ENCODE measurements at regions of chr1 and their contacts with region 1.

Region 1: GRCh38 chr1:25338188-25338981 is at the start of gene TMEM50A:
- DNase-seq: peak; percentile 99
- H3K4me3 Mint-ChIP-seq: peak within 1 kb of the TSS; percentile 97
- H3K27ac Mint-ChIP-seq: peak within 1 kb of the TSS; percentile 98
- H3K4me1 Mint-ChIP-seq: peaks cover 25% of the 10 kb centered on the region
- H3K27me3 Mint-ChIP-seq: no peaks in the 10 kb centered on the region
- total RNA-seq, gene TMEM50A: 94.1 and 102 TPM in 2 replicates

Region 2: DNA sequence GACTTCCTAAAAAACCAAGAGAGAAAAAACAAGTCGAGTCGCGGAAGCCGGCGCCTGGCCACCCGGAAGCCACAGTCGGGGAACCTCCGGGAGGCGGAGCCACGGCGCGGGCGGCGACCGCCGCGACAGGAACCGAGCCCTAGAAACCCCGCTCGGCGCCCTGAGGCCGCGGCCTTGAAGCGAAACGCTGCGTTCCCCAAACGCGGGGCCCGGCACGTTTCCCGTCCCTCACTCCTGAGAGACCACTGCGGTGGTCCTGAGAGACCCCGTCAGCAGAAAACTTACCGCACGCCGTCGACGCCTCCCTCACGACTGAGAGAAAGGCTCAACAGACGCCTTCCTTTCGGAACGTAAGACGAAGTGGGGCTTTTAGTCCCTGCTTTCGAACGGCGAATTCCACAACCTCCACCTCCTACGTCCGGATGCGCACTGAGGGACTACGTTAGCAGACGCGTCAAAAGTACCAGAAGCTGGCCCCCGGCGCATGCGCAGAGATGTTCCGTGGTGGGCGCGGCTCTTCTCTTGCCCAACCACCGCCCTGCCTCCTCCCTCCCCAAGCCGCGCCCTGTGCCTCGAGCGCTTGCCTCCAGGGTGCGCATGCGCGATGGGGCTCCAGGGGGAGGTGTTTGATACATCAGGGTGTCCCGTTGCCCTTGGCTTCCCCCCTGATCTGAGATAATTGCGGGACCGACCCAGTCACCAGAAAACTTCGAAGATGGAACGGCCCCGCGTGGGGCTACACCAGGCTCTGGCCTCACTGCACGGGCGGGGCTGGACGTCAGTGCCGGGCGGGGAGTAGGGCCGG is 91.2 kb before region 1 on chr1 and contains the start of gene RSRP1:
- intact Hi-C with region 1: loop called (anchors 5 kb)
- DNase-seq: peak; percentile 100
- H3K4me3 Mint-ChIP-seq: peak within 1 kb of the TSS; percentile 97
- H3K27ac Mint-ChIP-seq: peak within 1 kb of the TSS; percentile 99
- H3K4me1 Mint-ChIP-seq: peaks cover 42% of the 10 kb centered on the region
- H3K27me3 Mint-ChIP-seq: peaks cover 7% of the 10 kb centered on the region
- total RNA-seq, gene RSRP1: 117 and 118 TPM in 2 replicates

Region 3: GRCh38 chr1:25469177-25469576 is 130.8 kb after region 1 on chr1:
- intact Hi-C with region 1: loop called (anchors 5 kb)
- DNase-seq: no peak
- H3K4me3 Mint-ChIP-seq: no peak overlapping the region
- H3K27ac Mint-ChIP-seq: no peak overlapping the region
- H3K4me1 Mint-ChIP-seq: peaks cover 44% of the 10 kb centered on the region
- H3K27me3 Mint-ChIP-seq: no peaks in the 10 kb centered on the region

Measured in activated CD4-positive, alpha-beta T cell treated with anti-CD3 and anti-CD28 coated beads, Interleukin-2, amount 10 ng/mL, durations not matched to agents 24 days and 14 days (primary cell).